ENCODE measurements at regions of chr17 and their contacts with region 1.

Region 1: DNA sequence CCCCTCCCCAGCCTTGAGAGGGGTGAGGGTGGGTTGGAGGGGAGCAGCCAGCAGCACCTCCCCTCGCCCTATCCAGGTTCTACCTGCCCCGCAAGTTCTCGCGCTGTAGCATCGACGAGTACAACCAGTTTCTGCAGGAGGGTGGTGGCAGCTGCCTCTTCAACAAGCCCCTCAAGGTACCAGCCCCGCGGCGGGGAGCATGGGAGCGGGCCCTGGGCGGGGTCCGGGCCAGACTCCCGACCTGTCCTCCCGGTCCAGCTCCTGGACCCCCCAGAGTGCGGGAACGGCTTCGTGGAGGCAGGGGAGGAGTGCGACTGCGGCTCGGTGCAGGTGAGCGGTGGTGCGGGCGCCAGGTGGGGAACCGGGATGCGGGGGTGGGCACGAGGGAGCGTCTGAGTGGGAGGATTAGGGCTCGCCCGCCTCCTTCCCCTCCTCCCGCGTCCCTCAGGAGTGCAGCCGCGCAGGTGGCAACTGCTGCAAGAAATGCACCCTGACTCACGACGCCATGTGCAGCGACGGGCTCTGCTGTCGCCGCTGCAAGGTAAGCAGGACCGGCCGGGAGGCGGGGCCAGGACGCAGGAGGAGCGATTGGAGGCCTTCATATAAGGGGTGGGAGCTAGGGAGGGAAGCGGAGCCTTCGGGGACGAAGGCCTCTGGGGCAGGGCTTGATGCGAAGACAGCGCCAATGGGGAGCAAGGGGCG is 16.5 kb downstream of the ADAM11 start:
- DNase-seq: peak; percentile 97
- H3K4me3 Mint-ChIP-seq: peak overlapping the region; percentile 83
- H3K27ac Mint-ChIP-seq: no peak overlapping the region
- H3K4me1 Mint-ChIP-seq: peaks cover 7% of the 10 kb centered on the region
- H3K27me3 Mint-ChIP-seq: peaks cover 10% of the 10 kb centered on the region

Region 2: GRCh38 chr17:44829523-44830358 is 54.5 kb after region 1 on chr17 and contains the start of gene GJC1:
- intact Hi-C with region 1: loop called (anchors 5 kb)
- DNase-seq: no peak
- H3K4me3 Mint-ChIP-seq: peak within 1 kb of the TSS; percentile 75
- H3K27ac Mint-ChIP-seq: peak within 1 kb of the TSS; percentile 28
- H3K4me1 Mint-ChIP-seq: peaks cover 9% of the 10 kb centered on the region
- H3K27me3 Mint-ChIP-seq: peaks cover 50% of the 10 kb centered on the region
- total RNA-seq, gene GJC1: 8.2 and 9.4 TPM in 2 replicates

Region 3: GRCh38 chr17:44864866-44865660 is 89.8 kb after region 1 on chr17:
- intact Hi-C with region 1: loop called (anchors 1 kb)
- DNase-seq: peak; percentile 49
- H3K4me3 Mint-ChIP-seq: no peak overlapping the region
- H3K27ac Mint-ChIP-seq: no peak overlapping the region
- H3K4me1 Mint-ChIP-seq: no peaks in the 10 kb centered on the region
- H3K27me3 Mint-ChIP-seq: no peaks in the 10 kb centered on the region

Measured in activated T-helper 2 cell treated with anti-CD3 and anti-CD28 coated beads, Interferon-gamma antibody, Interleukin-2, Interleukin-4, amounts not matched to agents 10 μg/mL and 5 μg/mL and 100 μg/mL, durations not matched to agents 14 hours and 24 hours and 36 hours (primary cell).